ENCODE measurements at regions of chr1 and their contacts with region 1.

Region 1: GRCh38 chr1:90580176-90580575 is 136.9 kb downstream of the BARHL2 start:
- DNase-seq: no peak
- H3K4me3 ChIP-seq: no peak overlapping the region
- H3K27ac ChIP-seq: no peak overlapping the region
- H3K4me1 ChIP-seq: no peaks in the 10 kb centered on the region
- H3K27me3 ChIP-seq: peaks cover 3% of the 10 kb centered on the region
- CTCF ChIP-seq: no peak
- POLR2A ChIP-seq: no peak

Region 2: GRCh38 chr1:90457985-90458384 is 122.2 kb before region 1 on chr1:
- intact Hi-C with region 1: no loop called
- DNase-seq: no peak
- H3K4me3 ChIP-seq: no peak overlapping the region
- H3K27ac ChIP-seq: no peak overlapping the region
- H3K4me1 ChIP-seq: no peaks in the 10 kb centered on the region
- H3K27me3 ChIP-seq: peaks cover 3% of the 10 kb centered on the region
- CTCF ChIP-seq: no peak
- POLR2A ChIP-seq: no peak

Region 3: GRCh38 chr1:91165033-91165654 is 585.0 kb after region 1 on chr1:
- intact Hi-C with region 1: loop called in 1 of 2 experiments (anchors 10 kb)
- DNase-seq: peak; percentile 59 to 88 (median 78)
- H3K4me3 ChIP-seq: no peak overlapping the region
- H3K27ac ChIP-seq: no peak overlapping the region
- H3K4me1 ChIP-seq: no peaks in the 10 kb centered on the region
- H3K27me3 ChIP-seq: no peaks in the 10 kb centered on the region
- CTCF ChIP-seq: peak; percentile 69 to 89 (median 82)
- POLR2A ChIP-seq: no peak